CD4-positive, alpha-beta T cell (primary cell): ENCODE measurements at regions of chr17 and their contacts with region 1.

Region 1: DNA sequence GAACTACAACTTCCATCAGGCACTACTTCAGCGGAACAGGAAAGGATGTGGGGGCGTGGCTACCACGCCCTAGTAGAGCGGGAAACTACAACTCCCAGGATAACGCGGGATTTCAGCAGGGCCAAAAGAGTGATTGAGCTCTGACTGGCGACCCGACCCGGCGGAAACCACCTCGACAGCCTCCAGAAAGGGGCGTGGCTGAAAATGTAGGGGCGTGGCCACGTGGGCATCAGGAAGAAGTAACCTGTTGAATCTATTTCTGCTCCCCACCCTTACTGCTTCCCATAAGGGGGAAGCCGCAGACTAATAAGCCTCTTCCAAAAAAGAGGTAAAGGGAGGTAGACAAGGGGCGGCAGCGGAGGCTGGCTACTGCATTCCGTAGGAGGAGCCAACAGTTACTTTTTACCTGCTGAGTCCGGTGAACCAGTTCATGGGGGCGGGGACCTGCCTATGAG is at the start of gene TMEM102:
- DNase-seq: peak; percentile 96 to 100 (median 98)
- ATAC-seq: peak; percentile 82
- H3K4me3 ChIP-seq: peak within 1 kb of the TSS; percentile 86
- H3K4me3 Mint-ChIP-seq: peak within 1 kb of the TSS; percentile 87
- H3K27ac ChIP-seq: peak within 1 kb of the TSS; percentile 83 to 93
- H3K27ac Mint-ChIP-seq: peak within 1 kb of the TSS; percentile 87
- H3K4me1 ChIP-seq: peaks cover 51% of the 10 kb centered on the region
- H3K4me1 Mint-ChIP-seq: peaks cover 41% of the 10 kb centered on the region
- H3K27me3 ChIP-seq: peaks cover 16 to 21% of the 10 kb centered on the region in 2 experiments
- H3K27me3 Mint-ChIP-seq: peaks cover 16% of the 10 kb centered on the region
- CTCF ChIP-seq: no peak
- total RNA-seq, gene TMEM102: 6.8 to 7.1 TPM

Region 2: DNA sequence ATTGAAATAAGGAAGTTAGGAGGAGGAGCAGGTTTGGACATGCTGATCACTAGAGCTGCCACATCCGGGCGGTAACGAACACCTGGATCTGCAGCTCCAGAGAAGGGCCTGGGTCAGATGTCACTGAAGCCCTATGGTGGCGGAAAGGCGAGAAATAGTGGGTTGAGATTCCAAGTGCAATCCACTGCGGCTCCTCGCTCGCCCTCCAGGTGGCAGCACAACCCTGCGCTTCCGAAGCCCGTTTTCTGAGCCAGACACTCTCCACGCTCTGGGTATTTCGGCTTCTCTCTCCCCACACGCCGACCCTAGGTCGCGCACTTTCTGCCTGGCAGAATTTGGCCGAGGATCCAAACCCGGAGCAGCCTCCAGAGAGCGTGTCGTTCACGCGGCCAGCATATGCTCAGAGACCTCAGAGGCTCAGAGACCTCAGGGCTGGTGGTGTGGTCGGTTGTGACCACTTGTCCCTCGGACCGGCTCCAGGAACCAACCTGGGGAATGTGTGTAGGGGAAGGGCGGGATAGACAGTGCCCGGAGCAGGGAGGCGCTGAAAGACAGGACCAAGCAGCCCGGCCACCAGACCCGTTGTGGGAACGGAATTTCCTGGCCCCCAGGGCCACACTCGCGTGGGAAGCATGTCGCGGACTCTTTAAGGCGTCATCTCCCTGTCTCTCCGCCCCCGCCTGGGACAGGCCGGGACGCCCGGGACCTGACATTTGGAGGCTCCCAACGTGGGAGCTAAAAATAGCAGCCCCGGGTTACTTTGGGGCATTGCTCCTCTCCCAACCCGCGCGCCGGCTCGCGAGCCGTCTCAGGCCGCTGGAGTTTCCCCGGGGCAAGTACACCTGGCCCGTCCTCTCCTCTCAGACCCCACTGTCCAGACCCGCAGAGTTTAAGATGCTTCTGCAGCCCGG is 154.5 kb before region 1 on chr17:
- CTCF ChIA-PET with region 1: no interaction called
- POLR2A ChIA-PET with region 1: no interaction called
- intact Hi-C with region 1: loop called in 1 of 2 experiments (anchors 2 kb)
- DNase-seq: peak; percentile 77 to 93 (median 84)
- ATAC-seq: peak; percentile 90
- H3K4me3 ChIP-seq: peak overlapping the region; percentile 53
- H3K4me3 Mint-ChIP-seq: peak overlapping the region; percentile 85
- H3K27ac ChIP-seq: no peak overlapping the region
- H3K27ac Mint-ChIP-seq: peak overlapping the region; percentile 42
- H3K4me1 ChIP-seq: peaks cover 28% of the 10 kb centered on the region
- H3K4me1 Mint-ChIP-seq: peaks cover 26% of the 10 kb centered on the region
- H3K27me3 ChIP-seq: peaks cover 33 to 47% of the 10 kb centered on the region in 2 experiments
- H3K27me3 Mint-ChIP-seq: peaks cover 28% of the 10 kb centered on the region
- CTCF ChIP-seq: peak; percentile 86

Region 3: DNA sequence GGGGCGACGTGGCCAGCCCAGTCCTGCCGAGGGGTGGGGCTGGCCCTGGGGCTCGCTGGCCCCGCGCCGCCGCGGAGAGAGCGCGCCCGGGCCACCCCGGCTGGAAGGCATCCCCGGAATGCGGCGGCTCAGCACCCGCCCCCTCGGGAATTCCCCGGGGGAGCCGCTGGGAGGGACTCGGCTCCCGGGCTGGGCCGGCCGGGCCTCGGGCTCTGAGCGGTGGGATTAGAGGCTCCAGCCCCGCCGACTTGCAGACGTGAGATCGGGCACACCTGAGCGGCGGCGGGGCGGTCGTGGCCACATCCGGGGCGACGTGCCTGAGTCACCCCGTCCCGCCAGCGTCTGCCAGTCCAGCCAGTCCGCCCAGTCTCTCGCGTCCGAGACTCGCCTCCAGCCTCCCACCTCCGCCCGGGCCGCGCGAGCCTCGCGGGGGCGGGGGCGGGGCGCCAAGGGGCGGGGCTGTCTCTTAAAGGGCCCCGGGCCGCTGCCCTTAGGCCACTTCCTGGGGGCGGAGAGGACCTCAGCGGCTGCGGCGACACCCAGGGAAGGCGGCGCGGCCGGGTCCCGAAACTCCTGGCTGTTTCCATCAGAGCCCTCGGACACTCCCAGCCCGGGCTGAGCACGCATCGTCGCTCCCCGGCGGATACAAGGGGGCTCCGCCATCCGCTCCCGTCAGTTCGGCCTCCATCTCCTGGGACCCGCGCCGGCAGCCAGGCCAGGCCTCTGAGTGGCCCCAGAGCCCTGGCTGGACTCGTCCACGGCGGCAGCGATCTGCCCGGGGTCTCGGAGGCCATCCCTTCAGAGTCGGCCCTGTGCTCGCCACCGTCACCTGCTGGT is 83.4 kb before region 1 on chr17 and contains the start of gene KCTD11:
- CTCF ChIA-PET with region 1: interaction called, 55 read pairs
- POLR2A ChIA-PET with region 1: interaction called, 15 read pairs
- intact Hi-C with region 1: loop called (anchors 1 to 5 kb)
- DNase-seq: peak; percentile 45 to 91 (median 70)
- ATAC-seq: peak; percentile 58
- H3K4me3 ChIP-seq: peak within 1 kb of the TSS; percentile 66
- H3K4me3 Mint-ChIP-seq: peak within 1 kb of the TSS; percentile 90
- H3K27ac ChIP-seq: peak within 1 kb of the TSS; percentile 69 to 75
- H3K27ac Mint-ChIP-seq: peak within 1 kb of the TSS; percentile 86
- H3K4me1 ChIP-seq: peaks cover 59% of the 10 kb centered on the region
- H3K4me1 Mint-ChIP-seq: peaks cover 49% of the 10 kb centered on the region
- H3K27me3 ChIP-seq: no peaks in the 10 kb centered on the region
- H3K27me3 Mint-ChIP-seq: no peaks in the 10 kb centered on the region
- CTCF ChIP-seq: no peak
- total RNA-seq, gene KCTD11: 1.3 to 1.6 TPM

Region 4: GRCh38 chr17:7454980-7455379 is 19.7 kb after region 1 on chr17:
- CTCF ChIA-PET with region 1: interaction called, 55 read pairs
- POLR2A ChIA-PET with region 1: interaction called, 51 read pairs
- intact Hi-C with region 1: loop called (anchors 1 kb)
- DNase-seq: no peak
- ATAC-seq: no peak
- H3K4me3 ChIP-seq: peak overlapping the region; percentile 94
- H3K4me3 Mint-ChIP-seq: peak overlapping the region; percentile 94
- H3K27ac ChIP-seq: peak overlapping the region in 1 of 2 donors; percentile 52
- H3K27ac Mint-ChIP-seq: peak overlapping the region; percentile 85
- H3K4me1 ChIP-seq: peaks cover 23% of the 10 kb centered on the region
- H3K4me1 Mint-ChIP-seq: peaks cover 39% of the 10 kb centered on the region
- H3K27me3 ChIP-seq: no peaks in the 10 kb centered on the region
- H3K27me3 Mint-ChIP-seq: no peaks in the 10 kb centered on the region
- CTCF ChIP-seq: no peak

Region 5: DNA sequence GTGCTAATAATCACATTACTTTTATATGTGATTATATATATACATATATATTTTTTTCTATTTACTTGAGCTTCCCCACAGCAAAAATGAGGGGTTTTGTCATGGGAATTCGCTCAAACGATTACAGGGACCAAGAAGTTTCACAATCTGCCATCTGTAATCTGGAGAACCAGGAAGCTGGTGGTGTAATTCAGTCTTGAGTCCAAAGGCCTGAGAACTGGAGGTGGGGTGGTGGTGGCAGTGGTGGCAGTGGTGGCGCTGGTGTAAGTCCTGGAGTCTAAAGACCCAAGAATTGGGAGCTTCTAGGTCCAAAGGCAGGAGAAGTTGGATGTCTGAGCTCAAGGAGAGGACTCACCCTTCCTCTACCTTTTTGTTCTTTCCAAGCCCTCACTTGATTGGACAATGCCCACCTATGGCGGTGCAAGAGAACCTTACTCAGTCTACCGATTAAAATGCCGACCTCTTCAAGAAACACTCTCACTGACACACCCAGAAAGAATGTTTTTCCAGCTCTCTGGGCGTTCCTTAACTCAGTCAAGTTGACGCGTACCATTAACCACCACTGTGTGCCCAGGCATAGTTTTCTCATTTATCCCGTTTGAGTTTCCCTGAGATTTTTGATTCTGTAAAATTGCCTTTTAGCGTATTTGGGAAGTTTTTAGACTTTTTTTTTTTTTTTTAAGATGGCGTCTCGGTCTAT is 80.8 kb after region 1 on chr17:
- CTCF ChIA-PET with region 1: interaction called, 19 read pairs
- POLR2A ChIA-PET with region 1: interaction called, 11 read pairs
- intact Hi-C with region 1: no loop called
- DNase-seq: no peak
- ATAC-seq: no peak
- H3K4me3 ChIP-seq: no peak overlapping the region
- H3K4me3 Mint-ChIP-seq: no peak overlapping the region
- H3K27ac ChIP-seq: no peak overlapping the region
- H3K27ac Mint-ChIP-seq: no peak overlapping the region
- H3K4me1 ChIP-seq: no peaks in the 10 kb centered on the region
- H3K4me1 Mint-ChIP-seq: no peaks in the 10 kb centered on the region
- H3K27me3 ChIP-seq: no peaks in the 10 kb centered on the region
- H3K27me3 Mint-ChIP-seq: no peaks in the 10 kb centered on the region
- CTCF ChIP-seq: no peak

Region 6: GRCh38 chr17:7589204-7589868 is 154.1 kb after region 1 on chr17:
- CTCF ChIA-PET with region 1: interaction called, 5 read pairs
- POLR2A ChIA-PET with region 1: interaction called, 20 read pairs
- intact Hi-C with region 1: loop called in 1 of 2 experiments (anchors 5 kb)
- DNase-seq: peak; percentile 47 to 87 (median 62)
- ATAC-seq: peak; percentile 90
- H3K4me3 ChIP-seq: no peak overlapping the region
- H3K4me3 Mint-ChIP-seq: no peak overlapping the region
- H3K27ac ChIP-seq: no peak overlapping the region
- H3K27ac Mint-ChIP-seq: no peak overlapping the region
- H3K4me1 ChIP-seq: peaks cover 31% of the 10 kb centered on the region
- H3K4me1 Mint-ChIP-seq: peaks cover 7% of the 10 kb centered on the region
- H3K27me3 ChIP-seq: no peaks in the 10 kb centered on the region
- H3K27me3 Mint-ChIP-seq: no peaks in the 10 kb centered on the region
- CTCF ChIP-seq: peak; percentile 76